Left cardiac atrium (tissue), 4 donors: ENCODE measurements at regions of chr1 and their contacts with region 1.

Region 1: GRCh38 chr1:6579374-6580118 is at the start of gene ZBTB48:
- DNase-seq: peak; percentile 100
- ATAC-seq: peak; percentile 98 to 99
- total RNA-seq, gene ZBTB48: 11.5 to 14.3 TPM

Region 2: GRCh38 chr1:6613361-6614018 is 33.9 kb after region 1 on chr1 and contains the start of gene PHF13:
- intact Hi-C with region 1: no loop called
- DNase-seq: peak; percentile 100
- ATAC-seq: peak; percentile 96 to 98
- total RNA-seq, gene PHF13: 7.8 to 9.0 TPM

Region 3: DNA sequence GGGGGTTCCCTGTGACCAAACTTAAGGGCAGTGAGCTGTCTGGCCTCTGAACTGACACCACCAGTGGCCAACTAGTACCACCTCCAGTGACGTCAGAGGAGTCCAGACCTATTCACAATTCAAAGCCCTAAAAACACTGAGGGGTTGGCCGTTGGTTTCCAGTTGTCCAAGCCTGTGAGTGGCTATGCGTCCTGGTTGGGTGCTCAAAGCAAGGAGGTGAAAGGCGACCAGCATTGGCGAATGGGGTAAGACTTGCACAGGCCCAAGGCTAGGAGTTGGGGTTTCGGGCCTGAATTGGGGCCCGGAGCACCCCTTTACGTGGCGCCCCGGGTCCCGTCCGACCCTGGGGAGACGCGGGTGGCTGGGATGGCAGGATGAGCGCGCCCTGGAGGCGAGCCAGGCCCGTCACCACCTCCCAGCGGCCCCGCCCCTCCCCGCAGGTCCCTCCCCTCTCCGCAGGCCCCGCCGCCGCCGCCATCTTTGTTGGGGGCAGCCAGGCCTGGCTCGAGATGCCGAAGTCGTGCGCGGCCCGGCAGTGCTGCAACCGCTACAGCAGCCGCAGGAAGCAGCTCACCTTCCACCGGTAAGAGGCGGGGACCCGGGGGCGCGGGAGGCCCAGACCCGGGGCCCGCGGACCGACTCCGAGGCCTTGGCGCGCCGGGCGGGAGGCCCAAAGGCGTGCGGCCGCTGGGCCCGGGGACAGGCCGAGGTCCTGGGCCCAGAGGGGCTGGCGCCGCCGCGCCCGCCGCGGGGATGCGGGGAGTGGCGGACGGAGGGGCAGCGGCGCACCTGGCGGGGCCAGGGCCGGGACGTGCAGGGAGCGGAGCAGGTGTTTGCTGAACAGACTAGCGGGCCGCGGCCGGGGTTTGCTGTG is 45.4 kb after region 1 on chr1 and contains the start of gene THAP3:
- intact Hi-C with region 1: loop called in 1 of 2 experiments (anchors 5 kb)
- DNase-seq: peak; percentile 92
- ATAC-seq: peak; percentile 93 to 95
- total RNA-seq, gene THAP3: 8.9 to 14.6 TPM

Region 4: GRCh38 chr1:6770751-6771440 is 191.3 kb after region 1 on chr1:
- intact Hi-C with region 1: no loop called
- DNase-seq: no peak
- ATAC-seq: peak in 1 of 2 donors; percentile 73

Region 5: DNA sequence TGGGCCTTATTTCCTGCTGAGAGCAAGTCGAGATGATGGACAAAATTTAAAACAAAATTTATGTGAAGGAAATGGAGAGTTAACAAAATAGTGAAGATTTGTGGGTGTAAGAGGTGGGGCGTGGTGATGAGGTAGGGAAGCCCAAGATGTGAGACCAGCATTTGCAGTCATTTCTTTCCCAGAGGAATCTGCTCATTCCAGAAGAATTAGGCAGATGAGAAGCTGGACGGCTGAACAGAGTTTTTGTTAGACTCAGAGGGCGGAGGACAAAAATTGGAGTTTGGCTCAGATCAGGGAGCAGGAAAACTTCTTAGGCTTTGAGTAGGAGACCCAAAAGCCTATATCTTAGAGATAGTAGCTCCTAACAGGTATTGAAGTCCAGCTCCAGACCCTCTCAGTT is 271.0 kb after region 1 on chr1:
- intact Hi-C with region 1: no loop called
- DNase-seq: no peak
- ATAC-seq: no peak